Tibial artery (tissue), 4 donors: ENCODE measurements at regions of chr6 and their contacts with region 1.

Region 1: DNA sequence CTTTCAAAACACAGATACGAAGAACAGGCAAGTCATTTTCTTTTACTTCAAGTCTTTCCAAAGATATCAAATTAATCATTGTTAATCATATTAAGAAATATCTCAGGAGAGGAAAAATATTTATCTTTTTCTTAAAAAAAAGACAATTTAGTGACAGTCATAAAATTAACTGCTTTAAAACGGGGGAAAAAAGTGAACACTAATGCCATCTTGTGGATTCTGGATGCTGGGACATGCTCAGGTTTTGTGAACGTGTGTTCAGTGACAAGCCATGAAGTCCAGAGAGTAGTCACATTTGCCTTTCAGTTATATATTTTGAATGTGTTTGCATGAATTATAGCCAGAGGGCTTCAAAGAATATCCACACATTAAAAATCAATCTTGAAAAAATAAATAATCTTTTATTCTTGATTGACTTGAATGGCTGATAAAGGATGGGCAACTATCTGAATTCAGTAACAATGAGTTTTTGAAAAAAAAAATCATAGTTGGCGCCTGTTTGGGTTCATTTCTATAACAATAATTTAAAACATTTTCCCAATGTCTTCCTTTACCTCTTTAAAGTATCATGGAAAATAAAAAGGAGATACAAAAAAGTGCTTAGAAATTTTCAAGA is 74.7 kb upstream of the NOX3 start:
- DNase-seq: no peak
- H3K4me3 ChIP-seq: no peak overlapping the region
- H3K27ac ChIP-seq: peak overlapping the region; percentile 69 to 83
- H3K4me1 ChIP-seq: peaks cover 0 to 26% (median 11%) of the 10 kb centered on the region in 4 donors
- H3K27me3 ChIP-seq: no peaks in the 10 kb centered on the region
- CTCF ChIP-seq: peak; percentile 74 to 75

Region 2: GRCh38 chr6:154276810-154277628 is 1253.3 kb before region 1 on chr6:
- intact Hi-C with region 1: no loop called
- DNase-seq: no peak
- H3K4me3 ChIP-seq: no peak overlapping the region
- H3K27ac ChIP-seq: no peak overlapping the region
- H3K4me1 ChIP-seq: peaks cover 0 to 12% (median 0%) of the 10 kb centered on the region in 4 donors
- H3K27me3 ChIP-seq: no peaks in the 10 kb centered on the region
- CTCF ChIP-seq: peak; percentile 51 to 68

Region 3: GRCh38 chr6:155327326-155328073 is 202.8 kb before region 1 on chr6:
- intact Hi-C with region 1: loop called (anchors 5 kb)
- DNase-seq: peak; percentile 40 to 67
- H3K4me3 ChIP-seq: no peak overlapping the region
- H3K27ac ChIP-seq: peak overlapping the region in 1 of 2 donors; percentile 21
- H3K4me1 ChIP-seq: peaks cover 0 to 4% (median 1%) of the 10 kb centered on the region in 4 donors
- H3K27me3 ChIP-seq: no peaks in the 10 kb centered on the region
- CTCF ChIP-seq: peak; percentile 76 to 92

Region 4: GRCh38 chr6:155493694-155494143 is 36.6 kb before region 1 on chr6:
- intact Hi-C with region 1: loop called (anchors 2 kb)
- DNase-seq: peak; percentile 80 to 86
- H3K4me3 ChIP-seq: no peak overlapping the region
- H3K27ac ChIP-seq: peak overlapping the region; percentile 80 to 82
- H3K4me1 ChIP-seq: peaks cover 6 to 40% (median 28%) of the 10 kb centered on the region in 4 donors
- H3K27me3 ChIP-seq: no peaks in the 10 kb centered on the region
- CTCF ChIP-seq: no peak

Region 5: GRCh38 chr6:155638200-155638599 is 107.9 kb after region 1 on chr6:
- intact Hi-C with region 1: no loop called
- DNase-seq: no peak
- H3K4me3 ChIP-seq: no peak overlapping the region
- H3K27ac ChIP-seq: no peak overlapping the region
- H3K4me1 ChIP-seq: no peaks in the 10 kb centered on the region
- H3K27me3 ChIP-seq: no peaks in the 10 kb centered on the region
- CTCF ChIP-seq: no peak